HEK293 (cell line): ENCODE measurements at regions of chr2 and their contacts with region 1.

Region 1: DNA sequence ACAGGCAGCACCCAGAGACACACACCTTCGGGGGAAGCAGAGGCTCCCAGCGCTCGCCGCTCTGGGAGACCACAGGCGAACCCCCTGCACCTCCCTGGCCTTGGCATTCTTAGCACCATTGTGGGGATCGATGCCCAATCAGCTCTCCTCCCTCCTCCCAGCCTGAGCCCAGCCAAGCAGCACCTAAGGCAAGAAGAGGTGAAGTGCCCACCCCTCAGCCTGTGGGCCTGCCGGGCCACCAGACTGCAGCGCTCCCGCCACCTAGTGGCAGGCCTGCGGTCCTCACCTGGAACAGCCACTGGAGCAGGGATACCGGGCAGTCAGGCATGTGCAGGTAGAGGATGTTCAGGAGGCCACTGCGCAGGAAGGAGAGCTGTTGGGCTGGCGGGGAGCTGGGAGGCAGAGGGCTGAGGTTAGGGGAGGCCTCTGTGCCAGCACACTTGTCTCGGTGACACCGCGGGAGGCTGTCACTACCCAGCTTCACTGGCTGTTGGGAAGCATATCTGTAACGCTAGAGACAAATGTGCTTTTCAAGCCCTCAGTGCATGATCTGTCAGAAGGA is 35.2 kb downstream of the FAM178B start:
- H3K4me3 ChIP-seq: no peak overlapping the region
- H3K27ac ChIP-seq: no peak overlapping the region
- H3K4me1 ChIP-seq: no peaks in the 10 kb centered on the region
- CTCF ChIP-seq: peak; percentile 95

Region 2: GRCh38 chr2:96251721-96252292 is 699.4 kb before region 1 on chr2:
- CTCF ChIA-PET with region 1: no interaction called
- POLR2A ChIA-PET with region 1: no interaction called
- H3K4me3 ChIP-seq: no peak overlapping the region
- H3K27ac ChIP-seq: no peak overlapping the region
- H3K4me1 ChIP-seq: no peaks in the 10 kb centered on the region
- CTCF ChIP-seq: no peak

Region 3: GRCh38 chr2:96868555-96869280 is 82.5 kb before region 1 on chr2:
- CTCF ChIA-PET with region 1: interaction called, 14 read pairs
- POLR2A ChIA-PET with region 1: interaction called, 6 read pairs
- H3K4me3 ChIP-seq: peak overlapping the region; percentile 87
- H3K27ac ChIP-seq: peak overlapping the region; percentile 93
- H3K4me1 ChIP-seq: peaks cover 3% of the 10 kb centered on the region; the same call in 1 of the 2 replicates
- CTCF ChIP-seq: peak; percentile 49

Region 4: GRCh38 chr2:96940001-96940615 is 11.1 kb before region 1 on chr2:
- CTCF ChIA-PET with region 1: interaction called, 32 read pairs
- POLR2A ChIA-PET with region 1: no interaction called
- H3K4me3 ChIP-seq: no peak overlapping the region
- H3K27ac ChIP-seq: no peak overlapping the region
- H3K4me1 ChIP-seq: no peaks in the 10 kb centered on the region
- CTCF ChIP-seq: no peak

Region 5: GRCh38 chr2:97546711-97547110 is 595.5 kb after region 1 on chr2:
- CTCF ChIA-PET with region 1: no interaction called
- POLR2A ChIA-PET with region 1: no interaction called
- H3K4me3 ChIP-seq: no peak overlapping the region
- H3K27ac ChIP-seq: no peak overlapping the region
- H3K4me1 ChIP-seq: no peaks in the 10 kb centered on the region
- CTCF ChIP-seq: no peak